WTC11 (cell line): ENCODE measurements at regions of chr9 and their contacts with region 1.

Region 1: DNA sequence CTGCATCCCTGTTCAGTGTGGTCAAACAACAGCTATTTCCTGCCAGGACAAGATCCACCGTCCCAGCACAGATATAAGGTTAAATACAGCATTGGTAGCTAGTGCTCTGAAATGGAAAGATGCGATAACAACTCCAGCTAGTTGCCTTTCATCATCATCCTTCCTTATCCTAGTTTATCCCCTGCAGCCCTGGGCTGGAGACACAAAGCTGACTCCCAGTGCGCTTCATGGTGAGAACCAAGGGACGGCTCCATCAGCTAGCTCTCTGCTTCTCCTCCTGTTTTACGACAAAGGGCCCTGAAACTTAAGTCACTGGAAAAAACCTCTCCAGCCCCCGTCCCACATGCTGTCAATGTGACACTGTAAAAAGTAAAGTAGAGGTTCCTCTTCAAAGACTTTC is 37.9 kb downstream of the CDC14B start:
- DNase-seq: no peak
- ATAC-seq: peak; percentile 48
- H3K4me3 Mint-ChIP-seq: no peak overlapping the region
- H3K27ac Mint-ChIP-seq: peak overlapping the region; percentile 60
- H3K4me1 Mint-ChIP-seq: peaks cover 47% of the 10 kb centered on the region
- H3K27me3 Mint-ChIP-seq: no peaks in the 10 kb centered on the region
- CTCF ChIP-seq: no peak

Region 2: GRCh38 chr9:96555567-96556386 is 26.0 kb before region 1 on chr9:
- CTCF ChIA-PET with region 1: no interaction called
- POLR2A ChIA-PET with region 1: no interaction called
- DNase-seq: no peak
- ATAC-seq: no peak
- H3K4me3 Mint-ChIP-seq: no peak overlapping the region
- H3K27ac Mint-ChIP-seq: peak overlapping the region; percentile 11; the same call in 1 of the 2 replicates
- H3K4me1 Mint-ChIP-seq: peaks cover 31% of the 10 kb centered on the region
- H3K27me3 Mint-ChIP-seq: no peaks in the 10 kb centered on the region
- CTCF ChIP-seq: no peak

Region 3: GRCh38 chr9:96566498-96567207 is 15.1 kb before region 1 on chr9:
- CTCF ChIA-PET with region 1: interaction called, 16 read pairs
- POLR2A ChIA-PET with region 1: interaction called, 3 read pairs
- DNase-seq: peak; percentile 86
- ATAC-seq: peak; percentile 87
- H3K4me3 Mint-ChIP-seq: peak overlapping the region; percentile 79
- H3K27ac Mint-ChIP-seq: peak overlapping the region; percentile 89
- H3K4me1 Mint-ChIP-seq: peaks cover 43% of the 10 kb centered on the region
- H3K27me3 Mint-ChIP-seq: no peaks in the 10 kb centered on the region
- CTCF ChIP-seq: peak; percentile 27; the same call in 1 of the 2 replicates